Calu3 (cell line): ENCODE measurements at regions of chrX and their contacts with region 1.

Region 1: DNA sequence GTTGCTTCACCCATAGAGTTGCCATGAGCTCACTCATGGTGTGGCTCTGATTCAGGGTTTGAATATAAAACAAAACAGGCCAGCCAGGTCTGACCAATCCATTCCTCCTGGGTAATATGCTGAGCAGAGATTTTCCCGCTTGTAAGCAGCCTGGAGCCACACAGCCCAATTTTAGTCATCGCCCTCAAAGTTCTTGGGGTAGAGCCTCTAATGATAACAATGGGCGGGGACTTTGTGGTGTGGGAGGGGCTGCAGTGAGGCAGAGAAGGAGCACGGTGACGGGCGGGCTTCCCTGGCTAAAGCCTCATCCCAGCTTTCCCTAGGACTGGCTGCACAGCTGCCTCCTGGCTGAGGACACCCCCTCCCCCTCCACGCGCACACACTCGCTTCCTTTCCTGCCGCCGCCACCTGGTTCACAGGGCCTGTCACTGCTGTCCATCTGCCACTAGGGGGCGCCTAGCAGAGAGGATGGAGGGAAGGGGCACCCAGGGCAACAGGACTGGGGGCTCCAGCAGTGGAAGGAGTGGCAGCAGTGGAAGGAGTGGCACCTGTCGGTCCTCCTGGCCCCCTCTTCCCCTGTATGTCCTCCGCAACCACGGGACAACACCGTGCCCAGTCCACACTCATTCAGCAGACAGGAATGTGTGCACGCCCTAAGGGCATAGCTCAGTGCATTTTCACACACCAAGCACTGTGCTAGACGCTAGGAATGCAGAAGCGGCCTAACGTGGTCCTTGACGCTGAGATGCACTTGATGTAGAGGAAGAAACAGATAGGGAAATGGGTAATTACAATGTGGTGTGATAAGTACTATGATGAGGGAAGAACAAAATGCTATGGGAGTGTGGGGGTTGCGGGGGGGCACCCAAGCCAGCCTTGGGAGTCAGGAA is 26.8 kb downstream of the PRPS1 start:
- DNase-seq: peak; percentile 73
- H3K4me3 Mint-ChIP-seq: peak overlapping the region; percentile 17
- H3K27ac Mint-ChIP-seq: peak overlapping the region; percentile 90
- H3K4me1 Mint-ChIP-seq: peaks cover 21% of the 10 kb centered on the region
- H3K27me3 Mint-ChIP-seq: no peaks in the 10 kb centered on the region
- CTCF ChIP-seq: peak; percentile 62

Region 2: DNA sequence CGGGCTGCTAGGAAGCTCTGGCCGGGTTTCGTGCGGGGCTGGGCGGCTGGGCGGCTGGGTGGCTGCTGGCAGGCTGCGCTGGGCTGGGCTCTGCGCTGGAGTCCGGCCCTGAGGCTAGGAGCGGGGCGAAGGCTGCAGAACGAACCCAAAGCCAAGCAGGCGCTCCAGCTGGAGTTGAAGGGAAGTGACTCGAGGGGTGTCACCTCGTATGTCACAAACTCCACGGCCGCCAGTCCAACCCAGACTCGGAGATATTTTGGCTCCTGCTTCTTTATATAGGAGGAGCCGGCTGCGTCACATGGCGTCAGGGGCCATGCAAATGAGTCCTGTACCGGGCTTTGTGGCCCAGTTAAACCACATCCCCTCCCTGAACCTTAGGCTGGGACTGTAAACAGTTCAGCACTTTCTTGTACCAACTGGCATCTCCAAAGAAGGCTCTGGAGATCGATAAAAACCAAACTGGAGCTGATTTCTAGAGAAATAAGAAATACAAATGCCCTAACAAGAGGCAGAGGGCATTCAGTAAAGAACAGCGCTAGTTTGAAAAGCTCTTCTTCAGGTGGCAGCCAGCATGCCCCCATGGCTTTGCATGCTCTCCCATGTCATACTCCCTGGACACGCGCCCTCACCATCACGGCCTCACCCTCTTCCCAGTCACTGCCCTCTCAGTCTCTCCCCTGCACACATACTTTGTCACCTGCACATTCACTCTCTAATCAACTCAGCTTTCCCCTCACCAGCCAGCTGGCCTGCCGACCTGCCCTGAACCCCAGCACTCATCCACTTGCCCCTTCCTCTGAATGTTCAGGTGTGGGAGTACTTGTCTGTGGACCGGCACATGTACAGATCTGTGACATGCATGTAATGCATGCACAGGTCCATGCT is 61.9 kb after region 1 on chrX:
- CTCF ChIA-PET with region 1: interaction called, 5 read pairs
- intact Hi-C with region 1: loop called (anchors 5 kb)
- DNase-seq: peak; percentile 77
- H3K4me3 Mint-ChIP-seq: peak overlapping the region; percentile 92
- H3K27ac Mint-ChIP-seq: peak overlapping the region; percentile 82
- H3K4me1 Mint-ChIP-seq: peaks cover 51% of the 10 kb centered on the region
- H3K27me3 Mint-ChIP-seq: no peaks in the 10 kb centered on the region
- CTCF ChIP-seq: no peak

Region 3: DNA sequence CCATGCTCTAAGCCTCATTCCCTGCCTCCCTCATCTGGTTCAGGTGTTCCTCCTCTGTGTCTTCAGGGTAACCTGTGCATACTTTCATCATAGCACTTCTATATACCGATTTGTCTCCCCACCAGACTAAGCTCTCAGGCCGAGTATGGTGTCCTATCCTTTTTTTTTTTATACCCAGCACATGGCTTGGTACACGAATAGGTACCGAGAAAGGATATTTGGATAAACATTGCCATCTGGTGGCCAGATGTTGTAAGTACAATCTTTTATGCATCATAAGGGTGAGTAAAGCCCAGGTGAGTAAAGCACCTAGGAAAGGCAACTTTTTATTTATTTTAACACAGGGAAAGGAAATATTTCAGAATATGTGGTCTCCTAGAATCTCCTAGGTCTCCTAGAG is 238.9 kb after region 1 on chrX:
- CTCF ChIA-PET with region 1: no interaction called
- intact Hi-C with region 1: loop called (anchors 1 kb)
- DNase-seq: peak; percentile 42
- H3K4me3 Mint-ChIP-seq: no peak overlapping the region
- H3K27ac Mint-ChIP-seq: no peak overlapping the region
- H3K4me1 Mint-ChIP-seq: no peaks in the 10 kb centered on the region
- H3K27me3 Mint-ChIP-seq: no peaks in the 10 kb centered on the region
- CTCF ChIP-seq: peak; percentile 42